GM12878 (cell line): ENCODE measurements at regions of chr3 and their contacts with region 1.

Region 1: DNA sequence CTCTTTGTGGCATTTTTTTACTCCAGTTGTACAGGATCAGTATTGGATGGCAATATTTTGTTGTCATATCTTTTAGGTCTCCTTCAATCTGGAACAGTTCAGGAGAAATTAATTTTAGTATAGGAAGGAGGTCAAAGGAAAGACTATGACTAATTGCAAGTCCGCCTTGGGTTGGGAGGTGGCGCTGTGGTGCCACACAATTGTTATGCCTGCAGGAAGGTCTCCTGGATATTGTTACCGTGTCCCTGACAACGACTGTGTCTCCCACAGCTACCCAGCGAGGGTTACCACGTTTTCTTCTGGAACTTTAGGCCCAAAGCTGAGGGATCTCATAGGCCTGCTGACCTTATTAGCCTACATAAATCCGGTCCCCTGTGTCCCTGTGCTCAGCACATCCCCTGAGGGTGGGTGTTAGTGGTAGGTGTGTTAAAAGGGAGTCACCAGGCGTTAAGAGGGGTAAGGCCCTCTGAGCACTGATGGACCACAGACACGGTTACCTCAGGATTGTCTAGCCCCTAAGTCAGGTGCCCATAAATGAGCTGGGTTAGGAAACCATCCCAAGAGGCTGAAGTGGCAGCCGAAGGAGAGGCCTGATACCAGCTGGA is 31.5 kb downstream of the KCNAB1 start:
- DNase-seq: no peak
- ATAC-seq: peak; percentile 82
- H3K4me3 ChIP-seq: no peak overlapping the region
- H3K27ac ChIP-seq: no peak overlapping the region
- H3K4me1 ChIP-seq: no peaks in the 10 kb centered on the region
- H3K27me3 ChIP-seq: no peaks in the 10 kb centered on the region
- CTCF ChIP-seq: peak; percentile 72 to 78 (median 75)
- EP300 ChIP-seq: no peak
- POLR2A ChIP-seq: no peak
- RAD21 ChIP-seq: peak; percentile 85

Region 2: DNA sequence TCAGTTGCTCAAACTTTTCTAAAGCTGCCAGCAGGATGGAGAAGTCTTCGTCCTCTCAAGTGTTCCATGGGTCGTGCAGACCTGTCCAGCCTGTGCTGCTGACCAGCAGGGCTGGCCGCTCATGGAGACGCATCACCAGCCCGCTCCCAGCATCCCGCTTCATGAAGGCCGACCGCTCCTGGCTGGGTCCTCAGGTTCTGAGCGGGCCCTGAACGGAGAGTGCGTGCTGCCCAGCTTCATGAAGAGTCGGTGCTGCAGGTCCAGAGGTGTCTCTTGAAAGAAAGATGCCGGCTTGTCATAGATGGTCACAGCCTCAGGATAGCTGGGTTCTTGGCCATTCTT is 107.3 kb before region 1 on chr3:
- CTCF ChIA-PET with region 1: interaction called, 8 read pairs
- POLR2A ChIA-PET with region 1: no interaction called
- RAD21 ChIA-PET with region 1: interaction called, 14 read pairs
- SMC1A ChIA-PET with region 1: interaction called, 4 read pairs
- in situ Hi-C with region 1: no loop called
- intact Hi-C with region 1: no loop called
- DNase-seq: no peak
- ATAC-seq: no peak
- H3K4me3 ChIP-seq: no peak overlapping the region
- H3K27ac ChIP-seq: no peak overlapping the region
- H3K4me1 ChIP-seq: no peaks in the 10 kb centered on the region
- H3K27me3 ChIP-seq: no peaks in the 10 kb centered on the region
- CTCF ChIP-seq: no peak
- EP300 ChIP-seq: no peak
- POLR2A ChIP-seq: no peak
- RAD21 ChIP-seq: no peak

Region 3: DNA sequence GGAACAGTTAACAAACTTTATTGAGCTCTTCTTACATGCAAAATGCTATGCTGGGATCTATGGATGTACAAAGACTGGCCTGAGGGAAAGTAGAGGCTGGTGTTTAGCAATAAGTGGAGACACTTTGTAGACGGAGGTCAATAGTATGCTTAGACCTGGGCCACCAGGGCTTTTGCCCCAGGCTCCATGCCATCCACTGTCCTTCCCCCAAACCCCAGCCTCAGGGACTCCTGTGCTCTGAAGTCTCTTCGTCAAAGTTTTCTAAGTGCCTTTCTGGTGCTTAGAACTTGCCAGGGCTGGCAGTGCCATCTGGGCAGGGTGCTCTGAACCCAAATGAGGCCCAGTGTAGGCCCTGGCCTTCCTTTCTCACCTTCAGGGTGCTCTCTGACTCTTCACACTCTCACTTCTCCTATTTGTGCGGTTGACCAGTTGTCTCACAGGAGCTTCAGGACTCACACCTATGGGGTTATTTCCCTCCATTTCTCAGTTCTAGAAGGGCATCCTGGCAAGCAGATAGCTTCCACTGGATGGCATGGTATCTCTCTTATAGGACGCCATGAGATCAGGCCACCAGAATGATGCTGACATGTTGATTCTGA is 53.4 kb before region 1 on chr3:
- CTCF ChIA-PET with region 1: no interaction called
- POLR2A ChIA-PET with region 1: no interaction called
- RAD21 ChIA-PET with region 1: no interaction called
- SMC1A ChIA-PET with region 1: no interaction called
- in situ Hi-C with region 1: no loop called
- intact Hi-C with region 1: no loop called
- DNase-seq: peak; percentile 3
- ATAC-seq: peak; percentile 86
- H3K4me3 ChIP-seq: no peak overlapping the region
- H3K27ac ChIP-seq: no peak overlapping the region
- H3K4me1 ChIP-seq: no peaks in the 10 kb centered on the region
- H3K27me3 ChIP-seq: no peaks in the 10 kb centered on the region; a peak in 1 of 4 replicates
- CTCF ChIP-seq: no peak
- EP300 ChIP-seq: no peak
- POLR2A ChIP-seq: no peak
- RAD21 ChIP-seq: no peak

Region 4: GRCh38 chr3:156388497-156389448 is 236.8 kb after region 1 on chr3:
- CTCF ChIA-PET with region 1: interaction called, 205 read pairs
- POLR2A ChIA-PET with region 1: no interaction called
- RAD21 ChIA-PET with region 1: interaction called, 70 read pairs
- SMC1A ChIA-PET with region 1: interaction called, 84 read pairs
- in situ Hi-C with region 1: loop called (anchors 5 kb)
- intact Hi-C with region 1: no loop called
- DNase-seq: no peak
- ATAC-seq: peak; percentile 37; the same call in 2 of the 3 replicates
- H3K4me3 ChIP-seq: no peak overlapping the region
- H3K27ac ChIP-seq: no peak overlapping the region
- H3K4me1 ChIP-seq: no peaks in the 10 kb centered on the region
- H3K27me3 ChIP-seq: no peaks in the 10 kb centered on the region; a peak in 1 of 4 replicates
- CTCF ChIP-seq: no peak
- EP300 ChIP-seq: no peak
- POLR2A ChIP-seq: no peak
- RAD21 ChIP-seq: no peak

Region 5: GRCh38 chr3:156509189-156510174 is 357.6 kb after region 1 on chr3:
- CTCF ChIA-PET with region 1: interaction called, 122 read pairs
- POLR2A ChIA-PET with region 1: no interaction called
- RAD21 ChIA-PET with region 1: interaction called, 27 read pairs
- SMC1A ChIA-PET with region 1: interaction called, 29 read pairs
- in situ Hi-C with region 1: no loop called
- intact Hi-C with region 1: loop called (anchors 1 kb)
- DNase-seq: no peak
- ATAC-seq: peak; percentile 96
- H3K4me3 ChIP-seq: no peak overlapping the region
- H3K27ac ChIP-seq: no peak overlapping the region
- H3K4me1 ChIP-seq: no peaks in the 10 kb centered on the region
- H3K27me3 ChIP-seq: no peaks in the 10 kb centered on the region
- CTCF ChIP-seq: peak; percentile 36 to 70 (median 45); a peak in 4 of 6 replicates
- EP300 ChIP-seq: no peak
- POLR2A ChIP-seq: no peak
- RAD21 ChIP-seq: peak; percentile 86

Region 6: GRCh38 chr3:156674046-156674910 is 522.4 kb after region 1 on chr3 and contains the start of gene TIPARP:
- CTCF ChIA-PET with region 1: interaction called, 5 read pairs
- POLR2A ChIA-PET with region 1: no interaction called
- RAD21 ChIA-PET with region 1: no interaction called
- SMC1A ChIA-PET with region 1: interaction called, 4 read pairs
- in situ Hi-C with region 1: no loop called
- intact Hi-C with region 1: loop called (anchors 1 kb)
- DNase-seq: peak; percentile 99
- ATAC-seq: peak; percentile 84
- H3K4me3 ChIP-seq: peak within 1 kb of the TSS; percentile 98
- H3K27ac ChIP-seq: peak within 1 kb of the TSS; percentile 73
- H3K4me1 ChIP-seq: no peaks in the 10 kb centered on the region
- H3K27me3 ChIP-seq: no peaks in the 10 kb centered on the region
- CTCF ChIP-seq: peak; percentile 63 to 90 (median 86)
- EP300 ChIP-seq: peak; percentile 65 to 71
- POLR2A ChIP-seq: peak; percentile 100
- RAD21 ChIP-seq: peak; percentile 81
- polyA plus RNA-seq, gene TIPARP: 3.2 to 3.3 TPM

Region 7: DNA sequence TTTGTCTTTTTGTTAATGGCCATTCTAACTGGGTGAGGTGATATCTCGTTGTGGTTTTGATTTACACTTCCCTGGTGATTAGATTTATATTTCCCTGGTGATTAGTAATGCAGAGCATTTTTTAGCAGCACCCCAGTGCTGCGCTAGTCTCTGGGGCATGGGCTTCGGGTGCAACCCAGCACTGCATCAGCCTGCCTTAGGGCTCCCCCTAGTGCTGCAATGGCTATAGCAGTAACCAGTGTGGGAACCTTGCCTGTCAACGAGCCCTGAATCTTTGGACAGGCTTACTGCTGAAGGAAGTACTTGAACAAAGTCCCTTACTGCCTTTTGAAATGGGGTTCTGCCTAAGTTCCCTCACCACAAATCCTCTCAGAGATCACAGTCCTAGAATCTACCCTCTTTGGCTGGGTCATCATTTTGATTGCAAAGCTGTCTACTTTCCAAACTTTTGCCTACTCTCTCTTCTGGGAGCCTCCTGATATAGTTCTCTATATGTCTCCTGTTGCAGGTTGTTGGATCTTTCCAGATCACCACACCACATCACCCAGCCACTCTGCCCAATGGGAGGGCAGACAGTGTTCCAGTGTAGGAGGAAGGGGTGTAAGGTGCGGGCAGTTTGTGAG is 1087.3 kb after region 1 on chr3:
- CTCF ChIA-PET with region 1: no interaction called
- POLR2A ChIA-PET with region 1: no interaction called
- RAD21 ChIA-PET with region 1: no interaction called
- SMC1A ChIA-PET with region 1: no interaction called
- in situ Hi-C with region 1: no loop called
- intact Hi-C with region 1: loop called (anchors 5 kb)
- DNase-seq: peak; percentile 8
- ATAC-seq: peak; percentile 100
- H3K4me3 ChIP-seq: no peak overlapping the region
- H3K27ac ChIP-seq: no peak overlapping the region
- H3K4me1 ChIP-seq: no peaks in the 10 kb centered on the region
- H3K27me3 ChIP-seq: no peaks in the 10 kb centered on the region; a peak in 2 of 4 replicates
- CTCF ChIP-seq: peak; percentile 94 to 96 (median 95)
- EP300 ChIP-seq: no peak
- POLR2A ChIP-seq: no peak
- RAD21 ChIP-seq: peak; percentile 89